ENCODE measurements at regions of chr3 and their contacts with region 1.

Region 1: DNA sequence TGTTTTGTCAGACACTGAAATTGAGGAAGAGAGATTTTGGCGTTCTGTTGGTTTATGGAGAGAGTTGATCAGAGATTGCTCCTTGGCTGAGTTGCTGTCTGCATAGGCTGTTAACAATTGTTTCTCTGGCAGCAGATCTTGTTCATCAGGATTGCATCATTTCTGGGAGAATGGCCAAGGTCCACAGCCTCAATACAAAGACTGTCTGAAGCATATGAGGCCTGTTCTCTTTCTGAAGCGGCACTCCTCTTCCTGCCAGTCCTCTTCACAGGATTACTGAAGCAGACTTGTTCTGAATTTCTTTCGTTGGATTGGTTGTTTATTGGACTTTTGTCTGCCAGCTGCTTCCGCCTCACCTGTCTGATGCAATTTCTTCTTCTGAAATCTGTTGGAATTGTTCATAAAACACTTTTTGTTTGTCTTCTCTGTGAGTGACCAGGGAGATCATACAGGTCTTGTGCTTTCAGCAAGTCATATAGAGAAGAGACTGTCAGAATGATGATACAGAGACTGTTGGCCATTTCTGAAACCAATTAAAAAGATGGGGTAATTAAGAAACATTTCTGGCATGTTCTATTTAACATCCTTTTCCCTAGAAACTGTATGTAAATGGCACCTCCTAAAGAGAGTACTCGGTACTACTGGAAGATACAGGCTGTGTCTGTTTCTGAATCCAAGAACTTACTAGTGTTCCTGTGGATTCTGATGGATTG is 25.5 kb downstream of the SETD5 start:
- DNase-seq: peak; percentile 95
- H3K4me3 ChIP-seq: no peak overlapping the region
- H3K27ac ChIP-seq: peak overlapping the region; percentile 80 to 88 (median 85)
- H3K4me1 ChIP-seq: peaks cover 0 to 92% (median 67%) of the 10 kb centered on the region in 4 donors
- H3K27me3 ChIP-seq: no peaks in the 10 kb centered on the region
- CTCF ChIP-seq: peak; percentile 49 to 68 (median 50)
- EP300 ChIP-seq: peak in 1 of 4 donors; percentile 6
- POLR2A ChIP-seq: peak in 1 of 2 donors; percentile 50

Region 2: GRCh38 chr3:9153904-9154619 is 268.8 kb before region 1 on chr3:
- intact Hi-C with region 1: no loop called
- DNase-seq: peak; percentile 84
- H3K4me3 ChIP-seq: no peak overlapping the region
- H3K27ac ChIP-seq: no peak overlapping the region
- H3K4me1 ChIP-seq: peaks cover 0 to 12% (median 0%) of the 10 kb centered on the region in 4 donors
- H3K27me3 ChIP-seq: no peaks in the 10 kb centered on the region
- CTCF ChIP-seq: no peak
- EP300 ChIP-seq: no peak
- POLR2A ChIP-seq: no peak

Region 3: DNA sequence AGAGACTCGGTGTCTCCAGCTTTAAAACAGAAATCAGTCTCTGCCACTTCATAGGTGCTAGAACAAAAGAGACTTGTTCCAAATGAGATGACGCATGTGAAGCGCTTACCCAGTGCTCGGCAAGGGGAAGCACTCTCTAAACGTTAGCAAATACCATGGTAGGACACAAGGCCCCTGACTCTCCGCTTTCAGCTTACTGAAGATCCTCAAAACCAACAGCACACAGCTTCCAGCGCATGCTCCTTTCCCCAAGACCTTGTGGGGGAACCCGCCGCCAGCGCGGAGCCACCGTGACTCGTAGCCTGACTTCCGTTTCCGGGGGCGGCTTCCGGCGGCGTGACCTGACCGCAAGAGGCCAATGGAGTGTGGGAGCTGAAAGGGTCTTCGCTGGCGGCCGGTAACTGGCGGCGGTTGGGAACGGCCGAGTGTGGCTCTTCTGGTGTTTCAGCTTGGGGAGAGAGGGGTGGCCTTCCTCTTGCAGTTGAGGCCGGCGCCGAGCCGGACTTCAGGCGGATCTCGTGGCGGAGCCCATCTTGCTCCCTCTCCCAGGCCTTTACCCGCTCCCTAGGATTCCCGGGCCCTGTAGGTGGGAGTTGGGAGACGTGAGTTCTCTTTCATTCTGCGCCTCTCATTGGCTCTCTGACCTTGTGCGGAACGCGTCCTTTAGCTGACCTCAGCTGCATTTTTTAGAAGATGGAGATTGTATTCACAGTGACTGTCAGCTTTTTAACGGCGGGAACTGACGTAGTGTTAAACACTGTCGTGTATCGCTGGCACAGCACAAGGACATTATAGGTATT is 59.9 kb before region 1 on chr3 and contains the start of gene THUMPD3:
- intact Hi-C with region 1: loop called (anchors 5 kb)
- DNase-seq: peak; percentile 92
- H3K4me3 ChIP-seq: peak within 1 kb of the TSS; percentile 55 to 66 (median 62)
- H3K27ac ChIP-seq: peak within 1 kb of the TSS; percentile 85 to 90 (median 88)
- H3K4me1 ChIP-seq: peaks cover 0 to 24% (median 22%) of the 10 kb centered on the region in 4 donors
- H3K27me3 ChIP-seq: no peaks in the 10 kb centered on the region
- CTCF ChIP-seq: no peak
- EP300 ChIP-seq: peak in 1 of 4 donors; percentile 36
- POLR2A ChIP-seq: peak; percentile 54 to 71
- total RNA-seq, gene THUMPD3: 20.5 to 38.5 (median 36.0) TPM

Region 4: GRCh38 chr3:9396700-9397521 is 26.0 kb before region 1 on chr3:
- intact Hi-C with region 1: loop called (anchors 1 kb)
- DNase-seq: peak; percentile 99
- H3K4me3 ChIP-seq: peak overlapping the region; percentile 71 to 92 (median 86)
- H3K27ac ChIP-seq: peak overlapping the region; percentile 98 to 99 (median 99)
- H3K4me1 ChIP-seq: peaks cover 0 to 72% (median 70%) of the 10 kb centered on the region in 4 donors
- H3K27me3 ChIP-seq: no peaks in the 10 kb centered on the region
- CTCF ChIP-seq: no peak
- EP300 ChIP-seq: peak in 1 of 4 donors; percentile 2
- POLR2A ChIP-seq: peak; percentile 96 to 97

Measured in sigmoid colon (tissue), 7 donors.